PC-9 (cell line): ENCODE measurements at regions of chr12 and their contacts with region 1.

Region 1: DNA sequence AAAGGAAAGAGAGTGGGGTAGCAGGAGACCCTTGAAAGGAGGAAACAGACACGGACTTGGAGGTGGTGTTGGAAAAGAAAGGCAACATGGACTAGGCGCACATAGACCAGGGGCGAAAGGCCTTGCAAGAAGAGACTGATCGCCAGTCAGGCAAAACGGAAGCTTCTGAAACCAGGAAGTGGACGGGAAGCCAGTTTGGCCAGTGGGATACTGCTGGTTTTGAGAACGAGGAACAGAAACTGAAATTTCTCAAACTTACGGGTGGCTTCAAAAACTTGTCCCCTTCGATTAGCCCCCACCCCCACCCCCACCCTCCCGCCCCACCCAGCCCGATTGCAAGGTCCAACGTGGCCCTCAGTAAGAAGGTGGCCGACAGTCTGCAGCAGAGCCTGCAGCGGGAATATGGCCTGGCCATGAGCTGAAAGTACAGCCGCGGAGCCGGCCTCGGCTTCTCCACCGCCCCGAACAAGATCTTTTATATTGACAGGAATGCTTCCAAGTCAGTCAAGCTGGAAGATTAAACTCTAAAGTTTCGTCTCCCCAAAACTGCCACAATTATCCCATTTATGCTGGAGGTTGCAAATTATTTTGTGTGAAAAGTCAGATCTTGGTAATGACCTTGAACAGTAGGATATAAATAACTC is 364.7 kb downstream of the BCAT1 start:
- DNase-seq: no peak
- H3K4me3 ChIP-seq: no peak overlapping the region
- H3K27ac ChIP-seq: no peak overlapping the region
- H3K4me1 ChIP-seq: no peaks in the 10 kb centered on the region
- H3K27me3 ChIP-seq: 0 out of 2 replicates have a peak, but pooled peaks cover 5% of the 10 kb centered on the region
- CTCF ChIP-seq: no peak

Region 2: DNA sequence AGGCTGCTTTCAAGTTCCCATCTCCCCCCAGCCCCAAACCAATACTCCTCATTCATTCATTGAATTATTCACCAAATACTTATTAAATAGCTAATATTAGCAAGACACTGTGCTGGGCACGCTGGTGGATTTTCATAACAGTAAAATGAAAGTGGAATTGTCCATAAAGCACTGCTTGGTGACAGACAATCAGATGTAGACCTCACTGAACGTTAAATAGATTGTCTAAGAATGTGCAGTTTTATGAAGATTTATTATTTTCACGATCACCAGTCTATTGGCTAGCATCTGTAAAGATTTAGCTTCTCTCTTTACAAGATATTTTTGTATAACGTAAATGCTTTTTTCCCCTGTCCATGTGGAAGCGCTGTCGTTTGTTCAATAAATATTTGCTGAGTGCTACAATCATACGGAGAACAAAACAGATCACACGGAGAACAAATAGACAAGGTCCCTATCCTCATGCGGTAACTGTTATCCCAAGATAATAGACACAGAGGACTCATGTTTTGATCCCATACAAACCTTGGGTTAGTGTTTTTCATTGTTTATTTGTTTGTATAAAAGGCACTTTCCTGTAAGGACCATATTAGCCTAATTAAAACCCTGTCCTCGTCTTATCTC is 32.9 kb before region 1 on chr12:
- CTCF ChIA-PET with region 1: no interaction called
- POLR2A ChIA-PET with region 1: interaction called, 10 read pairs
- intact Hi-C with region 1: no loop called
- DNase-seq: no peak
- H3K4me3 ChIP-seq: no peak overlapping the region
- H3K27ac ChIP-seq: no peak overlapping the region
- H3K4me1 ChIP-seq: no peaks in the 10 kb centered on the region
- H3K27me3 ChIP-seq: peaks cover 32% of the 10 kb centered on the region
- CTCF ChIP-seq: no peak

Region 3: DNA sequence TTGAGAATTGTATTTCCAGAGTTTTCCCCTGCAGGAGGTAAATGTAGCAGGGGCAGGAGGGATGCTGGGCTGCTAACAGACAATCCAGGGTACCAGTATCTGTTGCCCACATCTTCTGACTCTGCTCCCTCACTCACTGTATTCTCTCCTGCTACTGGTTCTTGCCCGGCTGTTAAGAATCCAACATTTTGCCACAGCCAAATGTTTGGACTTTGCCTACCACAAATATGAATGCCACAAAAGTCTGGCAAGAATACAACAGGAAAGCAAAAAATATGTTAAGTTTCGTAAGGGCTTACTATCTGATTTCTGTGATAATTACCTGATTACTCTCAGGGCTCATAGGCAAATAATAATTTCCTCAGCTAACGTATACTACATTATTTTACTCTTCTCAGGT is 204.7 kb after region 1 on chr12:
- CTCF ChIA-PET with region 1: no interaction called
- POLR2A ChIA-PET with region 1: no interaction called
- intact Hi-C with region 1: no loop called
- DNase-seq: no peak
- H3K4me3 ChIP-seq: no peak overlapping the region
- H3K27ac ChIP-seq: no peak overlapping the region
- H3K4me1 ChIP-seq: no peaks in the 10 kb centered on the region
- H3K27me3 ChIP-seq: peaks cover 11% of the 10 kb centered on the region; the same call in 1 of the 2 replicates
- CTCF ChIP-seq: no peak